GM13977 (cell line): ENCODE measurements at regions of chr3 and their contacts with region 1.

Region 1: GRCh38 chr3:137105277-137105977 is 147.6 kb downstream of the IL20RB start:
- DNase-seq: peak; percentile 40
- CTCF ChIP-seq: peak; percentile 71

Region 2: DNA sequence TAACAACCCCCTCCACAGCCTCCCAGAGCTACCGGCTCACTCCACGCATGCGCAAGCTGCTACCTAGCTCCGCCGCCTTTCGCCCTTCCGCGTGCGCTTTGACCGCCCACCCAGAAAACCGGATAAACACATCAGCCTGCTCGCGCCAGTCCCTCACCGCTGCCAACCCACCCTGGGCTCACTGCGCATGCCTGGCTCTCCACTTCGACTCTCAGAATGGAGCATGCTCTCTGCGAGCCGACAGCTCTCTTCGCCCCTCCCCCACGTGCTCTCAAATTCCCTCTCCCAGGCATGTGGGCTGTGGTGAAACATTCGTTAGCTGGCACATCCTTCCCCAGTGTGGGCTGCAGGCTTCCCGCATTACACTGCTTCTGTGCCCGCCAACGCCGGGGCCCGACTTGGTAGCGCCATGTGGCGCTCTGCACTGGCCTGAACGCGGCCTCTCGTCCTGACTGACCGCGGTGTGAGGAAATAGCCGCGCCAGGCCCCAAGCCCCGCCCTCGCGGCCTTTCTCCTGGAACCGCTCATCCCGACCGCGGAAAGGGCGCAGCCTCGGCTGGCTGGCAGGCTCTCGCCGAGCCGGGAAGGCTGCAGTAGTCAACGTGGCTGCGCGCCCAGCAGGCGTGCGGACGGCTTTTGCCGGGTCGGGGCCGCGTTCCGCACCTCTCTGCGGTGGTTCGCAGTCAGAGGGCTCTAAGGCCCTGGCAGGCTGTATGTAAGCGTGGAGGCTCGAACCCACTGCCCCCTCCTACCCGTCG is 908.8 kb before region 1 on chr3:
- in situ Hi-C with region 1: no loop called
- DNase-seq: peak; percentile 98
- CTCF ChIP-seq: no peak

Region 3: GRCh38 chr3:136671921-136672320 is 433.5 kb before region 1 on chr3:
- in situ Hi-C with region 1: no loop called
- DNase-seq: no peak
- CTCF ChIP-seq: no peak

Region 4: GRCh38 chr3:137946345-137946973 is 841.0 kb after region 1 on chr3:
- in situ Hi-C with region 1: loop called (anchors 25 kb)
- DNase-seq: peak; percentile 49
- CTCF ChIP-seq: peak; percentile 66